Mammary epithelial cell (primary cell): ENCODE measurements at regions of chr3 and their contacts with region 1.

Region 1: DNA sequence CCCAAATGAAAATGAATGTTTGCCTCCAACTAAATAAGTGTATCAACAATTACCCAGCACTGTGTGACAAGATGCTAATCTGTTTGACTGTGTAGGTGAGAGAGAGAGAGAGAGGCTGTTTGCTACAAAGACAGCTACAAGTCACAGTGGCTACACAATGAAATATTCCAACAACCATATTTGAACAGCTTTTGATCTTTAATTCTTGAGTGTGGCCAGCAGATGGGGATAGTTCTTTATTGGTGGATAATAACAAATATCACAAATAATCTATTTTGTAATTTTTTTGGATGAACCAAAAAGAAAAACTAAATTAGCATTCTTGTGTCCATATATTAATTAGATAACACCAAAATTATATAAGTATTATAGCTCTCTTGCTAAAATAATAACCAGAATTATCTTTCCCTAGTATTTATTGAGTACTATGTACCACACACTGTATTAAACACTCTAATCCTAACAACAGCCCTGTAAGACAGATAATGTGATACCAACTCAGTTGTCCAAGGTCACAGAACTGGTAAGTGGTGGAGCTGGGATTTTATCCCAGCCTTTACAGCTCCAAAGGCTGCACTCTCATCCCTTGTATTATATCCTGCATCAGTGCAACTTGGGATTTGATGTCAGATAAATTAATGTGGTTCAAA is 61.9 kb upstream of the C3orf80 start:
- DNase-seq: no peak
- H3K4me3 ChIP-seq: no peak overlapping the region
- H3K27ac ChIP-seq: no peak overlapping the region
- H3K4me1 ChIP-seq: no peaks in the 10 kb centered on the region
- H3K27me3 ChIP-seq: no peaks in the 10 kb centered on the region
- CTCF ChIP-seq: peak; percentile 31 to 46

Region 2: DNA sequence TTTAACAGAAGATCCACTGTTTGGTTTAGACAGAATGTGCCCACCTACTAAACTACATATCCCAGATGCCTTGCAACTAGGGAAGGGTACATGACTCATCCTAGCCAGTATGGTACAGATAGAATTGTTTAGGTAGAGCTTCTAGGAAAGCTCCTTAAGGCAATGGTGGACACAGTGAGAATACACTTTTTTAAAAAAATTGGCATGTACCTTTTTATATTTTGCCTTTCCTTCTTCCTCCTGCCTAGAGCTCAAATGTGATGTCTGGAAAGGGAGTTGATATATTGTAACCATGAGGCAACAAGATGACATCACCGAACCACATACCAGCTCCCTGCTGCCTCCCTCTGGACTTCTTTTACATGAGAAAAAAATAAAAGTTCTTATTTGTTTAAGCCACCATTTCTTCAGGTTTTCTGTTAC is 47.5 kb after region 1 on chr3:
- CTCF ChIA-PET with region 1: interaction called, 16 read pairs
- dilution Hi-C with region 1: no loop called
- in situ Hi-C with region 1: no loop called
- intact Hi-C with region 1: loop called (anchors 5 kb)
- DNase-seq: peak; percentile 40
- H3K4me3 ChIP-seq: no peak overlapping the region
- H3K27ac ChIP-seq: no peak overlapping the region
- H3K4me1 ChIP-seq: no peaks in the 10 kb centered on the region
- H3K27me3 ChIP-seq: peaks cover 3% of the 10 kb centered on the region
- CTCF ChIP-seq: peak; percentile 28 to 49

Region 3: GRCh38 chr3:160343132-160343531 is 179.8 kb after region 1 on chr3:
- CTCF ChIA-PET with region 1: no interaction called
- dilution Hi-C with region 1: no loop called
- in situ Hi-C with region 1: loop called (anchors 5 to 10 kb)
- intact Hi-C with region 1: loop called (anchors 1 kb)
- DNase-seq: peak; percentile 4
- H3K4me3 ChIP-seq: no peak overlapping the region
- H3K27ac ChIP-seq: no peak overlapping the region
- H3K4me1 ChIP-seq: no peaks in the 10 kb centered on the region
- H3K27me3 ChIP-seq: no peaks in the 10 kb centered on the region
- CTCF ChIP-seq: peak; percentile 41 to 51

Region 4: DNA sequence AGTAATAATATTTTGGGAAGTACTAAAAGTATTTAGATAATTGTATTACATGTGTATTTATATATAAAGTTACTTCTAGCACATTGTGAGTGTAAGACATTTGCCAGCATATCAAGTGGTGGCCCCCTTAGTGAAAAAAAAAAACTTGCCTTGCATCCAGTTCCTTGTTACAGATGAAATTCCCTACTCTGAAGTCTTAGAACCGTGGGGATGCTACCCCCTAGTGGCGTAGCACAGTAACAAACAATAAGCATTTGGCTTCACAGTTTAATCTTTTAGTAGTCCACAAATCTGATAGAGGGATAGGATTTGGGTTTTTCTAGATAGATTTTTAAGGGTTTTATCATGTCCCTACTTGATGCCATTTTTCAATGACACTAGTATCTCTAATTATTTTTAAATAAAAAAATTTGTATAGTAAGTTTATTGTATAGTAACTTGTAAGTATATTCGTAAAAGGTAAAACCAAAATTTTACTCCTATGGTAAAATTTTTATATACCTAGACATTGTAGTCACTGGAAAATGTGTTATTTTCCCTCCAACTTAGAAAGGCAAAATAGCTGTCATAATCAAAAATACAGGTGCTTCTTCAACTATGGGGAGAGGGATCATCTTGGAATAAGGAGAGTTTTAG is 250.4 kb after region 1 on chr3:
- CTCF ChIA-PET with region 1: no interaction called
- dilution Hi-C with region 1: no loop called
- in situ Hi-C with region 1: no loop called
- intact Hi-C with region 1: loop called (anchors 1 kb)
- DNase-seq: peak; percentile 54
- H3K4me3 ChIP-seq: no peak overlapping the region
- H3K27ac ChIP-seq: no peak overlapping the region
- H3K4me1 ChIP-seq: no peaks in the 10 kb centered on the region
- H3K27me3 ChIP-seq: no peaks in the 10 kb centered on the region
- CTCF ChIP-seq: peak; percentile 85 to 90

Region 5: DNA sequence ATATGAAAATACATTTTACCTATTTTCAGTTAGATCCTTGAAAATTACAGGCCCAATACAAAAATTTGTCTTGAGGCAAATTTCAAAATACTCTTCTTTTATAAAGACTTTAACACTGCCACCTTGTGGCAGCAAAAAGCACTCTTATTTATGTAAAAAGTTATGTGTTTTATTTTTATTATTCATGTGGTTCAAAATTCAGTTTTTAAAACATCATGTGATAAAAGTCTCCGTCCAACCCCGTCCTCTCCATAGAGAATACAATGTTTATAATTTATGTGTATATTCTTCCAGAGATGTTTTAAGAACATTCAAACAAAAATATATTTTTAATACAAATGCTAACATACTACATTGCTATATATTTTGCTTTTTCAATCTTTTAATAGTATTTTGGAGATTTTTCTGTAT is 323.1 kb after region 1 on chr3:
- CTCF ChIA-PET with region 1: interaction called, 3 read pairs
- dilution Hi-C with region 1: no loop called
- in situ Hi-C with region 1: no loop called
- intact Hi-C with region 1: loop called (anchors 5 kb)
- DNase-seq: no peak
- H3K4me3 ChIP-seq: no peak overlapping the region
- H3K27ac ChIP-seq: no peak overlapping the region
- H3K4me1 ChIP-seq: no peaks in the 10 kb centered on the region
- H3K27me3 ChIP-seq: no peaks in the 10 kb centered on the region
- CTCF ChIP-seq: peak; percentile 53 to 58